Activated B cell treated with CpG ODN at 0.5 μM for 24 hours (primary cell): ENCODE measurements at regions of chr9 and their contacts with region 1.

Region 1: DNA sequence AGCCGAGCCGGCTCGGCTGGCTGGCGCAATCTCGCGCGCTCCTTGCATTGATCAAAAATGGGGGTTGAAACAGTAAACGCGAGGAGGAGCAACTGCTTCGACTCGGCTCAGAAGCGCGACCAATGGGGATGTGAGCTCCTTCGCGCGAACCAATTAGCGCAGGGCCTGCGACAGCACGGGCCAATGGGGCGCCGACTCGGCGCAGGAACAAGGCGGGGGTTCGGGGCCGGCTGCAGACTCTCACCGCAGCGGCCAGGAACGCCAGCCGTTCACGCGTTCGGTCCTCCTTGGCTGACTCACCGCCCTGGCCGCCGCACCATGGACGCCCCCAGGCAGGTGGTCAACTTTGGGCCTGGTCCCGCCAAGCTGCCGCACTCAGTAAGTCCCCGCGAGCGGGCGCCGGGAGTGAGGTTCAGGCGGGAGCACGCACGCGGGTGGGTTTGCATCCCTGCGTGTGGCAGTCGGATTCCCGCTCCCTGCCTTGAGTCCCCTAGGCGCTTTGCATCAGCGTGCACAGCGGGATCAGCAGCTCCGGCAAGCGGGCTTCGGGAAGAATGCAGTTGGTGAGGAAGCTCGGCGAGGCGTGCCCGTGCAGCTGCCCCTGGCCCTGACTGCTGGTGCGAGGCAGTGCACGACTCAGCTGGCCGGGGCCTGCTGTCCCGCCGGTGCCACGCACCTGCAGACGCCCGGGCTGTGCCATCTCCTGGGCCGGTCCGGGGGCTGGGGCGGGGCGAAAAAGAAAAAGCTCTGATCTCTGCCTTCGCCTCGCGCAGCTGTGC is at the start of gene PSAT1:
- DNase-seq: peak; percentile 75
- ATAC-seq: peak; percentile 96
- H3K4me3 Mint-ChIP-seq: peak within 1 kb of the TSS; percentile 89
- H3K27ac Mint-ChIP-seq: peak within 1 kb of the TSS; percentile 82
- H3K4me1 Mint-ChIP-seq: peaks cover 24% of the 10 kb centered on the region
- H3K27me3 Mint-ChIP-seq: peaks cover 7% of the 10 kb centered on the region
- CTCF ChIP-seq: no peak
- total RNA-seq, gene PSAT1: 58.3 and 59.4 TPM in 2 replicates

Region 2: GRCh38 chr9:77177161-77177893 is 1119.8 kb before region 1 on chr9 and contains the start of gene VPS13A:
- CTCF ChIA-PET with region 1: no interaction called
- POLR2A ChIA-PET with region 1: interaction called, 3 read pairs
- intact Hi-C with region 1: loop called (anchors 5 kb)
- DNase-seq: peak; percentile 92
- ATAC-seq: peak; percentile 82
- H3K4me3 Mint-ChIP-seq: peak within 1 kb of the TSS; percentile 92
- H3K27ac Mint-ChIP-seq: peak within 1 kb of the TSS; percentile 83
- H3K4me1 Mint-ChIP-seq: peaks cover 29% of the 10 kb centered on the region
- H3K27me3 Mint-ChIP-seq: no peaks in the 10 kb centered on the region
- CTCF ChIP-seq: no peak
- total RNA-seq, gene VPS13A: 58.0 and 69.8 TPM in 2 replicates

Region 3: GRCh38 chr9:78213712-78214111 is 83.4 kb before region 1 on chr9:
- CTCF ChIA-PET with region 1: no interaction called
- POLR2A ChIA-PET with region 1: interaction called, 10 read pairs
- intact Hi-C with region 1: no loop called
- DNase-seq: no peak
- ATAC-seq: no peak
- H3K4me3 Mint-ChIP-seq: no peak overlapping the region
- H3K27ac Mint-ChIP-seq: no peak overlapping the region
- H3K4me1 Mint-ChIP-seq: peaks cover 19% of the 10 kb centered on the region
- H3K27me3 Mint-ChIP-seq: no peaks in the 10 kb centered on the region
- CTCF ChIP-seq: no peak

Region 4: DNA sequence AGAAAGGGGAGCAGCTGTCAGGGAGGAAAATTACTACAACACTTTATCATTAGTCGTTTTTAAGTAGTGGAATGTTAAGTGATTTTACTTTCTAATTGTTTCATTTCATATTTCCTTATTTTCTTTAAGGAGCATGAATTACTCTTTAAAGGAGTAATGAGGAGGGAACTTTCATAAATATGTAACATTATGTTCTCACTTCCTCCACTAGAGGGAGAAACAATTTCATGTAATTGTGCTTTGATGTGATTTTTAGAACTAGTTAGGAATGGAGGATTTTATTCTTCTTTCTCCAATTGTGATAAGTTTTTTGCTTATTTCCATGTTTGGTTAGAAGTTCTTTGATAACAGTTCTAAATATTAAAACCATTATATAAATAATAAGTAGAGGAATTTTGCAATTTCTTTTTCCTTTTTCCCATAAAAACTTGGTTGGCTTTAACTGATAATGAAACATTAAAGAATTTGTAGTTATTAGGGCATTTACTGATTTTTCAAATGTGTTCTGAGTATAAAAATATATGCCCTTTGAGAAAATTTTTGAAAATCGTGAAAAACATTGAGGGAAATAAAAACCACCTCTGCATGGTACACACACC is 35.6 kb before region 1 on chr9:
- CTCF ChIA-PET with region 1: interaction called, 4 read pairs
- POLR2A ChIA-PET with region 1: interaction called, 6 read pairs
- intact Hi-C with region 1: loop called (anchors 2 kb)
- DNase-seq: no peak
- ATAC-seq: no peak
- H3K4me3 Mint-ChIP-seq: no peak overlapping the region
- H3K27ac Mint-ChIP-seq: no peak overlapping the region
- H3K4me1 Mint-ChIP-seq: no peaks in the 10 kb centered on the region
- H3K27me3 Mint-ChIP-seq: no peaks in the 10 kb centered on the region
- CTCF ChIP-seq: peak; percentile 96

Region 5: GRCh38 chr9:78397454-78397853 is 100.4 kb after region 1 on chr9:
- CTCF ChIA-PET with region 1: no interaction called
- POLR2A ChIA-PET with region 1: no interaction called
- intact Hi-C with region 1: no loop called
- DNase-seq: no peak
- ATAC-seq: no peak
- H3K4me3 Mint-ChIP-seq: no peak overlapping the region
- H3K27ac Mint-ChIP-seq: no peak overlapping the region
- H3K4me1 Mint-ChIP-seq: no peaks in the 10 kb centered on the region
- H3K27me3 Mint-ChIP-seq: peaks cover 2% of the 10 kb centered on the region
- CTCF ChIP-seq: no peak